ENCODE measurements at regions of chr3 and their contacts with region 1.

Region 1: GRCh38 chr3:12994607-12995388 is 78.4 kb downstream of the IQSEC1 start:
- DNase-seq: peak; percentile 60 to 97
- H3K4me3 ChIP-seq: peak overlapping the region; percentile 52 to 73 (median 60)
- H3K27ac ChIP-seq: no peak overlapping the region; the same call in 1 of the 2 replicates
- H3K4me1 ChIP-seq: peaks cover 0 to 14% (median 10%) of the 10 kb centered on the region in 4 experiments; a peak in 6 of 7 replicates
- H3K27me3 ChIP-seq: peaks cover 0 to 12% (median 8%) of the 10 kb centered on the region in 4 experiments; a peak in 3 of 7 replicates
- CTCF ChIP-seq: peak in 2 of 3 experiments; percentile 88 to 90; a peak in 3 of 4 replicates
- EP300 ChIP-seq: 0 out of 3 replicates have a peak, but pooled peaks of 1 of the 2 experiments have one; percentile 29
- POLR2A ChIP-seq: no peak
- RAD21 ChIP-seq: peak; percentile 60 to 72

Region 2: DNA sequence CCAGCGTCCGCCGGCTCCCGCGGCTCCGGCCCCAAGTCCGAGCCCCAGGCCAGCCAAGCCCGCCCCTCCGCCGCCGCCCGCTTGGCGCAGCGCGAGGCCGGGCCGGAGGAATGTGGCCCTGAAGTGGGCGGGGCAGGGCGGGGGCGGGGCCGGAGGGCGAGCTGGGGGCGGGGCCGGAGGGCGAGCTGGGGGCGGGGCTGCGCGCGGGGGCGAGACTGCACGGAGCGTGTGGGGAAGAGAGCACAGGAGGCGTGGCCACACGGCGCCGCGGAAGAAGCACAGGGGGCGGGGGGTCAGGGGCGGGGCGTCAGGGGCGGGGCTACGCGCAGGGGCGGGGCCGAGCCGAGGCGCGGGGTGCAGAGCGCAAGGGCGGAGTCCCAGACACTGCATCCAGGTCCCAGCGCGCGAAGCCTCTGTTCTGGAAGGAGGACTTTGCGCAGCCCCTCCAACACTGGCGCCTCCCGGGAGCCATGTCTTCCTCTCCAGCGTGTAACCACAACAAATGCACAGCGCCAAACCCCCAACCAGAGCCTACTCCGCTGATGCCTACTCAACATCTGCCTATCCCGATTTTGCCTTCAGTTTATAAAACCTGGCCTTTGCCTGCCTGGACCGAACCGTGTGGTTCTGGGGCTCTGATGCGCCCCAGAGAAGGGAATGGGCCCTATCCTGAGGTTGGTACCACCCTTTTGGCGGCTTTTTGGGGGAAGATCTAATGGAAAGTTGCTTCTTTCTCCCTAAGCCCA is 27.0 kb before region 1 on chr3:
- CTCF ChIA-PET with region 1: interaction called, 267 read pairs
- POLR2A ChIA-PET with region 1: interaction called, 15 read pairs
- DNase-seq: peak; percentile 60 to 87
- H3K4me3 ChIP-seq: peak overlapping the region; percentile 52 to 87 (median 63)
- H3K27ac ChIP-seq: no peak overlapping the region; the same call in 1 of the 2 replicates
- H3K4me1 ChIP-seq: peaks cover 2 to 24% (median 7%) of the 10 kb centered on the region in 4 experiments; a peak in 6 of 7 replicates
- H3K27me3 ChIP-seq: peaks cover 0 to 12% (median 2%) of the 10 kb centered on the region in 4 experiments; a peak in 5 of 7 replicates
- CTCF ChIP-seq: no peak
- EP300 ChIP-seq: no peak
- POLR2A ChIP-seq: peak in 1 of 2 experiments; percentile 78; a peak in 2 of 3 replicates
- RAD21 ChIP-seq: no peak

Region 3: GRCh38 chr3:13012228-13012691 is 17.5 kb after region 1 on chr3:
- CTCF ChIA-PET with region 1: interaction called, 47 read pairs
- POLR2A ChIA-PET with region 1: interaction called, 3 read pairs
- DNase-seq: no peak
- H3K4me3 ChIP-seq: no peak overlapping the region
- H3K27ac ChIP-seq: no peak overlapping the region
- H3K4me1 ChIP-seq: peaks cover 7 to 16% (median 9%) of the 10 kb centered on the region in 4 experiments
- H3K27me3 ChIP-seq: no peaks in the 10 kb centered on the region; a peak in 2 of 7 replicates
- CTCF ChIP-seq: no peak
- EP300 ChIP-seq: no peak
- POLR2A ChIP-seq: no peak
- RAD21 ChIP-seq: no peak

Region 4: DNA sequence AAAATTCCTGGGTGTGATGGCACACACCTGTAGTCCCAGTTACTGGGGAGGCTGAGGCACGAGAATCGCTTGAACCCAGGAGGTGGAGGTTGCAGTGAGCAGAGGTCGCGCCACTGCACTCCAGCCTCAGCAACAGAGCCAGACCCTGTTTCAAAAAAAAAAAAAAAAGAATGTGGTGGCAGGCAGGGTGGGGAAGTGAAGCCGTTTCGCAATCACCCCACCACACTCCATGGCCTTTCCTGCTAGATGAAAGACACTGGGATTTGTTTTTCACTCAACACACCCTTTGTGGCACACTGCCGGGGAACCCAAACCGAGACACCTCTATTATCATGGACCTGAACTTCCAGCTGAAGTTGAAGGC is 250.8 kb after region 1 on chr3:
- CTCF ChIA-PET with region 1: no interaction called
- POLR2A ChIA-PET with region 1: no interaction called
- DNase-seq: no peak
- H3K4me3 ChIP-seq: no peak overlapping the region
- H3K27ac ChIP-seq: no peak overlapping the region
- H3K4me1 ChIP-seq: peaks cover 0 to 4% (median 0%) of the 10 kb centered on the region in 4 experiments; a peak in 3 of 7 replicates
- H3K27me3 ChIP-seq: no peaks in the 10 kb centered on the region
- CTCF ChIP-seq: no peak
- EP300 ChIP-seq: no peak
- POLR2A ChIP-seq: no peak
- RAD21 ChIP-seq: no peak